Activated CD4-positive, alpha-beta T cell treated with anti-CD3 and anti-CD28 coated beads, Interleukin-2, amount 10 ng/mL, durations not matched to agents 7 days and 5 days (primary cell): ENCODE measurements at regions of chr10 and their contacts with region 1.

Region 1: GRCh38 chr10:130110246-130111112 is at the start of gene C10orf143:
- DNase-seq: peak; percentile 96
- H3K4me3 Mint-ChIP-seq: peak within 1 kb of the TSS; percentile 80
- H3K27ac Mint-ChIP-seq: peak within 1 kb of the TSS; percentile 96
- H3K4me1 Mint-ChIP-seq: peaks cover 52% of the 10 kb centered on the region
- H3K27me3 Mint-ChIP-seq: no peaks in the 10 kb centered on the region
- total RNA-seq, gene C10orf143: 5.5 to 5.8 TPM

Region 2: GRCh38 chr10:130127364-130128061 is 17.0 kb after region 1 on chr10:
- CTCF ChIA-PET with region 1: interaction called, 26 read pairs
- POLR2A ChIA-PET with region 1: interaction called, 4 read pairs
- DNase-seq: peak; percentile 54
- H3K4me3 Mint-ChIP-seq: no peak overlapping the region
- H3K27ac Mint-ChIP-seq: no peak overlapping the region
- H3K4me1 Mint-ChIP-seq: peaks cover 7% of the 10 kb centered on the region
- H3K27me3 Mint-ChIP-seq: peaks cover 43% of the 10 kb centered on the region

Region 3: DNA sequence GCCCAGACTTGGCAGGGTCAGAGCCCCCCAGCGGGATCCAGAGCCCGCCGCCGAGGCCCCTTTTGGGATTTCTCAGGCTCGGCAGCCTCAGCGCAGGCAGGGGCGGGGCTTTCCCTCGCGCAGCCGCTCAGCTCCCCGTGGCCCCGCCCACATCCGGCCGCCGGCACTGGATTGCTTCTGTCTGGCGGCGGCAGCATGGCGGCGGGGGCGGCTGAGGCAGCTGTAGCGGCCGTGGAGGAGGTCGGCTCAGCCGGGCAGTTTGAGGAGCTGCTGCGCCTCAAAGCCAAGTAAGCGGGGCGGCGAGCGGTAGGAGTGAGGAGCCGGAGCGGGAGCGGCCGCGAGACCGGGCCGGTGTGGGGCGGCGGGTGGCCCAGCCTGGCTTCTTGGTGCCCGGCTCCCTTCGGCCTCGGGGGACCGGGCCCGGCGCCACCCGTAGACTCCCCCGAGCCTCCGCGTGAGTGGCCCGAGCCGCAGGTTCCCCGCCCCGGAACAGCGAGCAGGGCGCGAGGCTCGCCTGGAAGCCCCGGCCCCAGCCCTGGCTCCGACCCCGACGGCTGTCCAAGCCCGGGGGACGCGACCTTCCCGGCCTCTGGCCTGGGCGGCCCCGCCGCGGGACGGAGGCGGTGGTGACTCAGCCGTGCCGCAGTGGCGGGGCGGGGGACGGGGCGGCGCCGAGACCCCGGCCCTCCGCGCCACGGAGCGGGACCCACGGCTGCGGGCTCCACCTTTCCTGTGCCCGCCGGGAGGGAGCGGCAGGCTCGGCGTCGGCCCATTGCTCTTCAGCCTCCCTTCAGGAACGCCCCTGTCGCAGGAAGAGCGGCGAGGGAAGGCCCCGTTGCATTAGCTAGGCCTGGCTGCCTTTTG is 26.0 kb after region 1 on chr10 and contains the start of gene GLRX3:
- CTCF ChIA-PET with region 1: interaction called, 18 read pairs
- POLR2A ChIA-PET with region 1: interaction called, 7 read pairs
- DNase-seq: peak; percentile 88
- H3K4me3 Mint-ChIP-seq: peak within 1 kb of the TSS; percentile 88
- H3K27ac Mint-ChIP-seq: peak within 1 kb of the TSS; percentile 92
- H3K4me1 Mint-ChIP-seq: peaks cover 43% of the 10 kb centered on the region
- H3K27me3 Mint-ChIP-seq: peaks cover 13% of the 10 kb centered on the region
- total RNA-seq, gene GLRX3: 78.7 to 90.1 TPM

Region 4: GRCh38 chr10:130141878-130142277 is 31.4 kb after region 1 on chr10:
- CTCF ChIA-PET with region 1: interaction called, 18 read pairs
- POLR2A ChIA-PET with region 1: interaction called, 4 read pairs
- DNase-seq: peak; percentile 26
- H3K4me3 Mint-ChIP-seq: peak overlapping the region; percentile 1
- H3K27ac Mint-ChIP-seq: peak overlapping the region; percentile 76
- H3K4me1 Mint-ChIP-seq: peaks cover 65% of the 10 kb centered on the region
- H3K27me3 Mint-ChIP-seq: no peaks in the 10 kb centered on the region